ENCODE measurements at regions of chr1 and their contacts with region 1.

Region 1: GRCh38 chr1:37994886-37995566 is 5.2 kb upstream of the SF3A3 start:
- DNase-seq: no peak
- H3K27ac ChIP-seq: peak overlapping the region; percentile 94
- CTCF ChIP-seq: no peak

Region 2: GRCh38 chr1:38018864-38019343 is 23.9 kb after region 1 on chr1:
- CTCF ChIA-PET with region 1: interaction called, 12 read pairs
- POLR2A ChIA-PET with region 1: no interaction called
- DNase-seq: no peak
- H3K27ac ChIP-seq: no peak overlapping the region
- CTCF ChIP-seq: peak; percentile 70